ENCODE measurements at regions of chr6 and their contacts with region 1.

Region 1: DNA sequence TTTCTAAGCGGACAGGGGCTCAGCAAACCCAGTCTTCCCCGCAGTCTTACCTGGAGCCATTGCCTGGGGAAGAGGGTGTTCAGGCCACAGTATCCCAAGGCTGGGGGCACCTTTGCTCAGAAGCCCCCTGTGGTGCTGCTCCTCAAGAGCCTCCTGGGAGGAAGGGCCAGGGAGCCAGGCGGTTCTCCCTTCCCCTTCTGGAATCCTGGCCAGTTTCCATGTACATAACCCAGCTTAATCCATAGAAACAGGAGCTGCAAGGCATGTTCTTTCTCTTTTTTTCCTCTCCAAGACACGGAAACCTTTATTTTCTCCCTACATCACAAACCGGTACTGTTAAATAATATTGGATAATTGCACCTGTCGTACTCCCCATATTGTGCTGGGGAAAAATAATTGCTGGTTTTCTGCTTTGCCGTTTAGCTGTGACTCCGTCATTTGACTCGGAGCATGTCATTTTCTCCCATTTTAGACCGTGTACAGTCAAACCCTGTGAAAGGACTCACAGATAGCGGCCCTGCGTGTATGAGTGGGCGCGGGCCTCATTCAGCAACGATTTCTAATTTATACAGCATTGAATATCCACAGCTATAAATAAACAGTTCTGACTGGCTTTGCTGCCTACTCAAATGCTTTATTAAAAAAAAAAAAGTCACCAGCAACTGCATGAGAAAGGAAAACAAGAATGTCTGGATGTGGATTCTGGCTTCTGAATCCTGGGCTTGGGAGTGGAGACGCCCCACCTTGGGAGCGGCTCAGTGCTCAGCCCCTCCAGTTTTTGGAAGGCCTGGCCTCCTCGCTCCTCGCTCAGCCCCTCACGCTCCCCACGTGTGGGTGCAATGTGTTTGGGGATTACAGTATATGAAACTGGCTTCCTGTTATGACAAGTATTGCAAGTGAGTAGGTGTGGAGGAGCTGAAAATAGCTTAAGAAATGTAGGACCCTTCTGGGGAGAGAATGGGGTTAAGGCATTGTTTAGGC is 67.3 kb downstream of the ADTRP start:
- DNase-seq: peak in 1 of 3 donors; percentile 54
- H3K4me3 ChIP-seq: no peak overlapping the region
- H3K4me3 Mint-ChIP-seq: no peak overlapping the region
- H3K27ac ChIP-seq: no peak overlapping the region
- H3K27ac Mint-ChIP-seq: peak overlapping the region in 6 of 7 donors; percentile 58 to 97 (median 94)
- H3K4me1 ChIP-seq: peaks cover 25 to 30% of the 10 kb centered on the region in 2 donors
- H3K4me1 Mint-ChIP-seq: peaks cover 42% of the 10 kb centered on the region
- H3K27me3 ChIP-seq: no peaks in the 10 kb centered on the region
- H3K27me3 Mint-ChIP-seq: peaks cover 0 to 9% (median 0%) of the 10 kb centered on the region in 3 donors
- CTCF ChIP-seq: no peak

Region 2: GRCh38 chr6:11770546-11771466 is 59.5 kb after region 1 on chr6:
- intact Hi-C with region 1: loop called in 1 of 2 experiments (anchors 10 kb)
- DNase-seq: peak; percentile 81 to 99 (median 87)
- H3K4me3 ChIP-seq: peak overlapping the region in 1 of 3 experiments; percentile 43
- H3K4me3 Mint-ChIP-seq: peak overlapping the region in 1 of 2 donors; percentile 75
- H3K27ac ChIP-seq: peak overlapping the region; percentile 82
- H3K27ac Mint-ChIP-seq: peak overlapping the region; percentile 81 to 98 (median 89)
- H3K4me1 ChIP-seq: peaks cover 41 to 52% of the 10 kb centered on the region in 2 donors
- H3K4me1 Mint-ChIP-seq: peaks cover 50% of the 10 kb centered on the region
- H3K27me3 ChIP-seq: no peaks in the 10 kb centered on the region
- H3K27me3 Mint-ChIP-seq: peaks cover 0 to 5% (median 2%) of the 10 kb centered on the region in 3 donors
- CTCF ChIP-seq: no peak